Caco-2 (cell line): ENCODE measurements at regions of chr16 and their contacts with region 1.

Region 1: DNA sequence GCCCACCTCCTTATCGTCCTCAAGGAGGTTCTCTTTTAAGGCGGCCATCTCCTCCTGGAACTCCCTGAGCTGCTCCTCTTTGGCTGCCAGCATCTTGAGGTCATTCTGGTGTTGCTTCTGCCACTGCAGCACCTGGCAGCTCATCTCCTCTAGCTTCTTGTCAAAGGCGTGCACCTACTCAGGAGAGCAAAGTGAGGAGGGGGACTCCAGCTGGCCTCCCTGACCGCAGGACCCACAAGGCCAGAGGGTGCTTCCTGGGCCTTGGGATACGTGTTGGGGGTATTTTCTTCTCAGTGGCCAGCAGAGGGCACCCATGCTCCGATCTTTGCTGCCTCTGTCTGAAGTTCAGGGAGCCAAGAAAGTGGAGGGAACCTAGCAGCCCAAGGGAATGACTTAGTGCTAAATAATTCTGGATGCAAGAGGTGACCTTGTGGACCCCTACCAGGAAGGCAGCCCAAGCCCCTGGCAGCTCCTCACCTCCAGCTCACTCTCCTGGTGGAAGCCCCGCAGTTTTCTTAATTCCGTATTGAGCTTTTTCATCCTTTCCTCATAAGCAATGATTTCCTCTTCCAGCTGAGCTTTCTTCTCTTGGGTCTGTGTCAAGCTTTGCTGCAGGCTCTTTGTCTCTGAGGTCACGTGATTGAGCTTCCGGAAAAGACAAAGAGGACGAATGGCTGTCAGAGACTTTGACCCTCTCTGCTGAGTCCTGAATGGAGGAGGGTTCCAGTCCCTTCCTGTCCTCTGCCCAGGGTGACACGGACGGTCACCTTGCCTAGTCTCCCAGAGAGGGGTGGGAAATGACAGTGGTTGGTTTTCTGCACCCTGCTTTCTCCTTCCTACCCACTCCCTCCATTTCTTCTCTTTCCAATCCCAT is 31.4 kb downstream of the DHX38 start:
- DNase-seq: peak; percentile 71 to 81
- H3K4me3 ChIP-seq: no peak overlapping the region
- H3K4me3 Mint-ChIP-seq: no peak overlapping the region
- H3K27ac Mint-ChIP-seq: no peak overlapping the region
- H3K4me1 ChIP-seq: peaks cover 6% of the 10 kb centered on the region; the same call in 1 of the 2 replicates
- H3K4me1 Mint-ChIP-seq: no peaks in the 10 kb centered on the region
- H3K27me3 ChIP-seq: no peaks in the 10 kb centered on the region
- H3K27me3 Mint-ChIP-seq: peaks cover 4% of the 10 kb centered on the region
- CTCF ChIP-seq: peak; percentile 90 to 92

Region 2: DNA sequence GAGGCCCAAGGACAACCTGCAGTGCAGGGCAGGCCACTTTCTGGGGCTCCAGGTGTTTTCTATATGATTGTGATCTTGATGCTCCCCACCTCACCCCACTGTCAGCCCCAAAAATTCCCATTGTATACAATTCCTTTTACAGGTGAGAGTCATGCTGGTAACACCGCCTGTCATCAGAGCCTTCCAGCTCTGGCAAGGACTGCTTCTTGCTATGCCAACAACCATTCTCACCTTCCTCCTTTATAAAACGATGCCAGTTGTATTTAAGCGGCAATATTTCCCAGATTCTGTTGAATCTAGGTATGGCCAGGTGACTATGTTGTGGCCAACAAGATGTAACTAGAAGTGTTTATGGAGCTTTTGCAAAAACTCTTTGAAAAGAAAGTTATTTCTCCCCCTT is 796.8 kb before region 1 on chr16:
- CTCF ChIA-PET with region 1: no interaction called
- POLR2A ChIA-PET with region 1: no interaction called
- intact Hi-C with region 1: no loop called
- DNase-seq: no peak
- H3K4me3 ChIP-seq: no peak overlapping the region
- H3K4me3 Mint-ChIP-seq: no peak overlapping the region
- H3K27ac Mint-ChIP-seq: no peak overlapping the region
- H3K4me1 ChIP-seq: no peaks in the 10 kb centered on the region
- H3K4me1 Mint-ChIP-seq: no peaks in the 10 kb centered on the region
- H3K27me3 ChIP-seq: no peaks in the 10 kb centered on the region
- H3K27me3 Mint-ChIP-seq: no peaks in the 10 kb centered on the region
- CTCF ChIP-seq: no peak

Region 3: GRCh38 chr16:71995038-71995437 is 130.0 kb before region 1 on chr16:
- CTCF ChIA-PET with region 1: no interaction called
- POLR2A ChIA-PET with region 1: no interaction called
- intact Hi-C with region 1: no loop called
- DNase-seq: no peak
- H3K4me3 ChIP-seq: no peak overlapping the region
- H3K4me3 Mint-ChIP-seq: no peak overlapping the region
- H3K27ac Mint-ChIP-seq: no peak overlapping the region
- H3K4me1 ChIP-seq: no peaks in the 10 kb centered on the region
- H3K4me1 Mint-ChIP-seq: no peaks in the 10 kb centered on the region
- H3K27me3 ChIP-seq: no peaks in the 10 kb centered on the region
- H3K27me3 Mint-ChIP-seq: peaks cover 11% of the 10 kb centered on the region
- CTCF ChIP-seq: no peak

Region 4: GRCh38 chr16:72066747-72067146 is 58.3 kb before region 1 on chr16:
- CTCF ChIA-PET with region 1: no interaction called
- POLR2A ChIA-PET with region 1: no interaction called
- intact Hi-C with region 1: loop called (anchors 2 kb)
- DNase-seq: peak in 1 of 2 experiments; percentile 39
- H3K4me3 ChIP-seq: no peak overlapping the region
- H3K4me3 Mint-ChIP-seq: no peak overlapping the region
- H3K27ac Mint-ChIP-seq: no peak overlapping the region
- H3K4me1 ChIP-seq: no peaks in the 10 kb centered on the region; the same call in 1 of the 2 replicates
- H3K4me1 Mint-ChIP-seq: peaks cover 9% of the 10 kb centered on the region
- H3K27me3 ChIP-seq: no peaks in the 10 kb centered on the region
- H3K27me3 Mint-ChIP-seq: no peaks in the 10 kb centered on the region
- CTCF ChIP-seq: peak; percentile 73 to 74

Region 5: DNA sequence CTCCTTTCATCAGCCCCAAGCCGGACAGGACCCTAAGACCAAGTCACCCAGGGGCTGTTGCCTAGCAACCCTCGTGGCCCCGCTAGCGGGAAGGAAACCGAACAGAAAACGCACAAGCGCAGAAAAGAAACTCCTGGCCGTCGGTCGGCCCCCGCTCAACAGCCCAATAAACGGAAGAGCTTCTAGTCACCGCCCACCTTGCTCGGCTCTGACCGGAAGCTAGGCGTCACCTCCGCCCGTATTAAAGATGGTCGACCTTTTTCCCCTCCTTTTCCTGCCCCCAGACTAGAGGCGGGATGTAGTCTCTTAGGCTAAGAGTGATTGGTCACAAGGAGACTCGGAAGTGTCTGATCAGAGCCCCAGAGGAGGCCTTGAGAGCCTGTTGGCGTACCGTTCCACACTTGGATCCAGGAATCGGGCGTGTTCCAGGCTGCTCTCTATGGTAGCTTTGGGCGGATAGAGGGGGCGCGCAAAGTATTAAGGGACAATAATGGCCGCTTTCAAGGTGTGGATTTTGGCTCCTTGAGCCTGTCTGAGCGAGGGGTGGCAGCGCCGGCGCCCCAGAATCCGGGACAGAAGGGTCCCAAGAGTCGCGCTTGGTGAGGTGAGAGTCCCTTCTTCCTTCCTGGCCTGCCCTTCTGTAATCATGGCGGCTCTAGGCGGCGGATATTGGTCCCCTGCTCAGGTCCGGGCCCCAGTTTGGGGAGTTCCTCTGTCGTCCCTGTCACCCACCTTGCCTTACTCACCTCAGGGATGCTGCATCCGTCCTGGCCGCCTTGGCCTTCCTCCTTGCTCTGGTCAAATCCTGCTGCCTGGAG is 31.3 kb before region 1 on chr16 and contains the starts of genes DHX38 and TXNL4B:
- CTCF ChIA-PET with region 1: no interaction called
- POLR2A ChIA-PET with region 1: no interaction called
- intact Hi-C with region 1: no loop called
- DNase-seq: peak; percentile 96 to 98
- H3K4me3 ChIP-seq: peak within 1 kb of the TSS; percentile 72
- H3K4me3 Mint-ChIP-seq: peak within 1 kb of the TSS; percentile 95
- H3K27ac Mint-ChIP-seq: peak within 1 kb of the TSS; percentile 97
- H3K4me1 ChIP-seq: 0 out of 2 replicates have a peak, but pooled peaks cover 9% of the 10 kb centered on the region
- H3K4me1 Mint-ChIP-seq: peaks cover 18% of the 10 kb centered on the region
- H3K27me3 ChIP-seq: no peaks in the 10 kb centered on the region
- H3K27me3 Mint-ChIP-seq: no peaks in the 10 kb centered on the region
- CTCF ChIP-seq: no peak
- total RNA-seq, gene DHX38: 89.1 and 92.1 TPM in 2 replicates
- total RNA-seq, gene TXNL4B: 17.9 and 18.4 TPM in 2 replicates

Region 6: GRCh38 chr16:72149676-72150464 is 24.9 kb after region 1 on chr16:
- CTCF ChIA-PET with region 1: interaction called, 14 read pairs
- POLR2A ChIA-PET with region 1: no interaction called
- intact Hi-C with region 1: loop called (anchors 1 kb)
- DNase-seq: peak in 1 of 2 experiments; percentile 27
- H3K4me3 ChIP-seq: no peak overlapping the region
- H3K4me3 Mint-ChIP-seq: no peak overlapping the region
- H3K27ac Mint-ChIP-seq: no peak overlapping the region
- H3K4me1 ChIP-seq: no peaks in the 10 kb centered on the region
- H3K4me1 Mint-ChIP-seq: no peaks in the 10 kb centered on the region
- H3K27me3 ChIP-seq: no peaks in the 10 kb centered on the region
- H3K27me3 Mint-ChIP-seq: peaks cover 3% of the 10 kb centered on the region
- CTCF ChIP-seq: peak; percentile 23 to 48

Region 7: GRCh38 chr16:72203401-72203800 is 78.4 kb after region 1 on chr16:
- CTCF ChIA-PET with region 1: no interaction called
- POLR2A ChIA-PET with region 1: no interaction called
- intact Hi-C with region 1: loop called (anchors 2 kb)
- DNase-seq: no peak
- H3K4me3 ChIP-seq: no peak overlapping the region
- H3K4me3 Mint-ChIP-seq: no peak overlapping the region
- H3K27ac Mint-ChIP-seq: no peak overlapping the region
- H3K4me1 ChIP-seq: peaks cover 14% of the 10 kb centered on the region
- H3K4me1 Mint-ChIP-seq: peaks cover 12% of the 10 kb centered on the region
- H3K27me3 ChIP-seq: peaks cover 2% of the 10 kb centered on the region; the same call in 1 of the 2 replicates
- H3K27me3 Mint-ChIP-seq: peaks cover 19% of the 10 kb centered on the region
- CTCF ChIP-seq: no peak

Region 8: DNA sequence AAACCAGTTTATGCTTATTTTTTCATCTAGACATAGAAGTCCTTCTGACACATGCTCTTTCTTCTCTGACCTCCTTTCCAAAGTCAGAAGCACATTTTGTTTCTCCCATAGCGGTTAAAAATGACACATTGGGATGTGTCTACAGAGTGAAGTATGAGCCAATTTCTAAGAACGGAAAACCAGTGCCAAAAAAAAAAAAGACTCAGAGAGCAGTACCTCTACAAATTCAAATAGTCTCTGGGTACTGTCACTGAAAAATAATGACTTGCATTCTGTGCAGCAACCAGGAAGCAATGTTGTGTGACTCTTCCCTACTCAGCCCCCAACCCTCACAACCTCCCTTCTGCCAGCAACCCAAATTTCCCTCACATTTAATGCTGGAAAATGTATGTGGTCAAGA is 192.4 kb after region 1 on chr16:
- CTCF ChIA-PET with region 1: no interaction called
- POLR2A ChIA-PET with region 1: no interaction called
- intact Hi-C with region 1: no loop called
- DNase-seq: no peak
- H3K4me3 ChIP-seq: no peak overlapping the region
- H3K4me3 Mint-ChIP-seq: no peak overlapping the region
- H3K27ac Mint-ChIP-seq: no peak overlapping the region
- H3K4me1 ChIP-seq: no peaks in the 10 kb centered on the region
- H3K4me1 Mint-ChIP-seq: no peaks in the 10 kb centered on the region
- H3K27me3 ChIP-seq: no peaks in the 10 kb centered on the region
- H3K27me3 Mint-ChIP-seq: no peaks in the 10 kb centered on the region
- CTCF ChIP-seq: no peak

Region 9: GRCh38 chr16:72467157-72467759 is 342.3 kb after region 1 on chr16:
- CTCF ChIA-PET with region 1: interaction called, 18 read pairs
- POLR2A ChIA-PET with region 1: no interaction called
- intact Hi-C with region 1: loop called (anchors 1 kb)
- DNase-seq: peak in 1 of 2 experiments; percentile 53
- H3K4me3 ChIP-seq: no peak overlapping the region
- H3K4me3 Mint-ChIP-seq: no peak overlapping the region
- H3K27ac Mint-ChIP-seq: no peak overlapping the region
- H3K4me1 ChIP-seq: no peaks in the 10 kb centered on the region
- H3K4me1 Mint-ChIP-seq: no peaks in the 10 kb centered on the region
- H3K27me3 ChIP-seq: no peaks in the 10 kb centered on the region
- H3K27me3 Mint-ChIP-seq: no peaks in the 10 kb centered on the region
- CTCF ChIP-seq: peak; percentile 67 to 84